Natural killer cell (primary cell): ENCODE measurements at regions of chr12 and their contacts with region 1.

Region 1: GRCh38 chr12:62466594-62467491 is at the start of gene MON2:
- DNase-seq: peak; percentile 86 to 93
- ATAC-seq: peak; percentile 95 to 98 (median 97)
- H3K4me3 ChIP-seq: peak within 1 kb of the TSS; percentile 94
- H3K4me3 Mint-ChIP-seq: peak within 1 kb of the TSS; percentile 96
- H3K27ac ChIP-seq: peak within 1 kb of the TSS; percentile 97
- H3K27ac Mint-ChIP-seq: peak within 1 kb of the TSS; percentile 95 to 96
- H3K4me1 ChIP-seq: peaks cover 20% of the 10 kb centered on the region
- H3K4me1 Mint-ChIP-seq: peaks cover 15% of the 10 kb centered on the region in 2 donors
- H3K27me3 ChIP-seq: no peaks in the 10 kb centered on the region
- H3K27me3 Mint-ChIP-seq: peaks cover 0 to 6% of the 10 kb centered on the region in 2 donors
- CTCF ChIP-seq: no peak
- total RNA-seq, gene MON2: 80.0 to 100 (median 86.7) TPM

Region 2: DNA sequence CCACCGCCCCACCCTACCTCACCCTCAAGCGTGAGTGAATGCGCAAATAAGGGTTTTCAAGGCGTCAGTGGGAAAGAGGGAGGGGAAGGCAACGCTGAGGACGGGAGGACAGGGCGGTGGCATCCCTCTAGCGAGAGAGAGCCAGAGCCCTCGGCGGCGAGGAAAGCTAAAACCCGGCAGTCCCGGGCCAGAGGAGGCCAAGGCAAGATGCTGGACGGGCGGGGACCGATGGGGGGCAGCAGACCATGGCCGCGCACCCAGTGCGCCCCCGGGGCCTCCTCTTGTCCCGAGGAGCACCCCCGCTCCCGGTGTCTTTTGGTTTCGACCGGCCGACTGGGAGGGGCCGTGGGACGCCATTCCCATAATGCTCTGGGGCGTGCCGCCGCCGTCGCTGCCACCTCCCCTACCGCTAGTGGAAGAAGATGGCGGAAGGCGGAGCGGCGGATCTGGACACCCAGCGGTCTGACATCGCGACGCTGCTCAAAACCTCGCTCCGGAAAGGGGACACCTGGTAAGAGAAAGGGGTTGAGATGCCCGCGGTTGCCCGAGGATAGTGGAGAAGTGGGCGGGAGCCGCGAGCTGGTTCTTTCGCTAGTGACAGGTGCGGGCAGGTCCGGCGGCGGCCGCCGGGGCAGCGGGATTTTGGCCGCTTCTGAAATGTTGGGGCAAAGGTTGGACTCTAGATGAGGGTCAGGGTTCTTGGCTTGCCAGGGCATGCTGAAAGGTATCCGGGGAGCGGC is 206.7 kb before region 1 on chr12 and contains the start of gene USP15:
- intact Hi-C with region 1: loop called (anchors 1 kb)
- DNase-seq: peak; percentile 97
- ATAC-seq: peak; percentile 85 to 95 (median 88)
- H3K4me3 ChIP-seq: peak within 1 kb of the TSS; percentile 84
- H3K4me3 Mint-ChIP-seq: peak within 1 kb of the TSS; percentile 100
- H3K27ac ChIP-seq: peak within 1 kb of the TSS; percentile 93
- H3K27ac Mint-ChIP-seq: peak within 1 kb of the TSS; percentile 99 to 100
- H3K4me1 ChIP-seq: peaks cover 14% of the 10 kb centered on the region
- H3K4me1 Mint-ChIP-seq: peaks cover 51 to 52% of the 10 kb centered on the region in 2 donors
- H3K27me3 ChIP-seq: no peaks in the 10 kb centered on the region
- H3K27me3 Mint-ChIP-seq: no peaks in the 10 kb centered on the region
- CTCF ChIP-seq: peak; percentile 63
- total RNA-seq, gene USP15: 188 to 251 (median 197) TPM

Region 3: DNA sequence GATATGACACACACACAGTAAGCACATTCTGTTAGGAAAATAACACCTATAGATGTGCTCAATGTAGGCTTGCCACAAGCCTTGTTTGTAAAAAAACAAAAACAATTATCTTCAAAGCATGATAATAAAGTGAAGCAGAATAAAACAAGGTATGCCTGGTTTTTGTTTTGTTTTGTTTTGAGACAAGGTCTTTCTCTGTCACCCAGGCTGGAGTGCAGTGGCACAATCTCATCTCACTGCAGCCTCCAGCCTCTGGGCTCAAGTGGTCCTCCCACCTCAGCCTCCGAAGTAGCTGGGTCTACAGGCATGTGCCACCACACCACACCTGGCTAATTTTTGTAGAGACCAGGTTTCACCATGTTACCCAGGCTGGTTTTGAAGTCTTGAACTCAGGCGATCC is 52.7 kb before region 1 on chr12:
- intact Hi-C with region 1: no loop called
- DNase-seq: no peak
- ATAC-seq: no peak
- H3K4me3 ChIP-seq: no peak overlapping the region
- H3K4me3 Mint-ChIP-seq: no peak overlapping the region
- H3K27ac ChIP-seq: no peak overlapping the region
- H3K27ac Mint-ChIP-seq: peak overlapping the region in 1 of 2 donors; percentile 24
- H3K4me1 ChIP-seq: no peaks in the 10 kb centered on the region
- H3K4me1 Mint-ChIP-seq: peaks cover 1 to 2% of the 10 kb centered on the region in 2 donors
- H3K27me3 ChIP-seq: no peaks in the 10 kb centered on the region
- H3K27me3 Mint-ChIP-seq: peaks cover 0 to under 1% of the 10 kb centered on the region in 2 donors
- CTCF ChIP-seq: no peak

Region 4: GRCh38 chr12:62603061-62603810 is 136.4 kb after region 1 on chr12:
- intact Hi-C with region 1: loop called (anchors 2 kb)
- DNase-seq: peak; percentile 78 to 92
- ATAC-seq: peak; percentile 60 to 81 (median 64)
- H3K4me3 ChIP-seq: peak overlapping the region; percentile 61
- H3K4me3 Mint-ChIP-seq: peak overlapping the region; percentile 91
- H3K27ac ChIP-seq: peak overlapping the region; percentile 98
- H3K27ac Mint-ChIP-seq: peak overlapping the region; percentile 99 to 100
- H3K4me1 ChIP-seq: peaks cover 3% of the 10 kb centered on the region
- H3K4me1 Mint-ChIP-seq: peaks cover 34 to 38% of the 10 kb centered on the region in 2 donors
- H3K27me3 ChIP-seq: no peaks in the 10 kb centered on the region
- H3K27me3 Mint-ChIP-seq: no peaks in the 10 kb centered on the region
- CTCF ChIP-seq: no peak